ENCODE measurements at regions of chr10 and their contacts with region 1.

Region 1: GRCh38 chr10:59240582-59241183 is 64.2 kb downstream of the PHYHIPL start:
- DNase-seq: no peak

Region 2: DNA sequence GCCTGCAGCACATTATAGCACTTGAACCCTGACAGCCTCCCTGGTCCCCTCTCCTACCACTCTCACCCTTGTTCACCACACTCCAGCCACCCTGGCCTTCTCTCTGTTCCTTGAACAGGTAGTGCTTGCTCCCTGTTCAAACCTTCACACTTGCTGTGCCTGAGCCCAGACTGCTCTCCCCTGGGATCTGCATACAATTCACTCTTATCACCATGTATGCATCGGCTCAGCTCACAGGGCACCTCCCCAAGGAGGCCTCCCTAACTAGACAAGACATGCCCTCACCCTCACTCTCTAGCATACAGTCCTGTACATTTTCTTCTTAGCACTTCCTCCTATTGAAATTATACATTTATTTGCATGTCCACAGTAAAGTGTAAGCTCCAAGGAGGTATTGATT is 62.3 kb after region 1 on chr10:
- intact Hi-C with region 1: loop called (anchors 10 kb)
- DNase-seq: no peak

Region 3: DNA sequence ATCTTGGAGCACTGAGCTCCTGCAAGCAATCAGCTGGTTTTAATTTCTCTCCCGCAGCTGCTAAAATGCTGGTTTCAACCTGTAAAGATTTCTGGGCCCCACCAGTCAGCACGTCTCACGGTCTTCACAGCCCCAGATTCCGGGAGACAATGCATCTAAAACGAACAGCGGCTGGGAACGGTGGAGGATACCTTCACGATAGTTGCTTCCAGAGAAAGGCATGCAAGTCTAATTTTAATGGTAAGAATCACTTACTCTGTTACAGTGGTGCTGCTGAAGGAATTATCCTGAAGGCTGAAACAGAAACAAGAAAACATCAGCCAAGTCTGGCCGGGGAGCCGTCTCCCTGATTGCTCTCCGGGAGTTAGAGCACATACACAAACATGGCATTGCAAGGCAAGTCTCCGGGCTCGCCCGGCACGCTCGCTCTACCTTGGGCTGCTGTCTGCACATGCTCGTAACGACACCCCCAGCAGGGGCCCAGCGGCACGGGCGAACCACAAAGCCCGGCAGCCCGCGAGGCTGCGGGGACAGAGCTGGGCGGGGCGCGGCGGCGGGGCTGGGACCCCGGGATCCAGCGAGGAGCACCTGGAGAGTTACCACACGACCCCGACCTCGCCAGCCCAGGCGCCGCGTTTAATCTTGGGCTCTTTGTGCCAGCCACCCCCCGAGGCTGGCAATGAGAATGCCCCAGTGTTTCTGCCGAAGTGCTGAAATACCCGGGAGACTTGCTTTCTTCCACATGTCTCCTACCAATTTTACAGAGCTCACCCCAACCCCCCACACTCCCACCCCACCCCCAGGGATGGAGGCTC is 121.7 kb after region 1 on chr10 and contains the start of gene FAM13C:
- intact Hi-C with region 1: loop called (anchors 10 kb)
- DNase-seq: peak; percentile 83
- total RNA-seq, gene FAM13C: 7.5 TPM

Region 4: GRCh38 chr10:59465088-59465487 is 224.4 kb after region 1 on chr10:
- intact Hi-C with region 1: loop called (anchors 2 kb)
- DNase-seq: no peak

Region 5: DNA sequence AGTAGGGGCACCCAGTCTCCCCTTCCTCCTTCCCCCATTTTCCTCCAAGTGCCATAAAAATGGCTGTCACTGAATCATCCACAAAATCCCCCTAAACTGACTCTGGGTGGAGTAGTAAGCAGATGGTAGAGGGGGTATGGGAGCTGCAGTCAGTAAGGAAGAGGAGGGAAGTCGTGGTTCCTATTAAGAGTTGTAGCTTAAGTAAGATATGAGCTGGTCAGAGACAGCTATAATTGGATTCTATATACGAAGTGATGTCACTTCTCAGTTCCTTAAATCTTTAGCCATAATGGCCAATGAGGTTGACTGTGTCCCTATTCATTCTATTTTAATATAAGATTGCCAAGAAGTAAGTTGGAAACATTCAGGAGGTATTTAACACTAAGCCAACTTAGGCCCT is 337.3 kb after region 1 on chr10:
- intact Hi-C with region 1: loop called (anchors 2 kb)
- DNase-seq: no peak

Region 6: GRCh38 chr10:59625721-59626522 is 385.2 kb after region 1 on chr10:
- intact Hi-C with region 1: loop called (anchors 2 kb)
- DNase-seq: no peak

Measured in cardiac septum (tissue), 1 donor.